OCI-LY7 (cell line): ENCODE measurements at regions of chr22 and their contacts with region 1.

Region 1: DNA sequence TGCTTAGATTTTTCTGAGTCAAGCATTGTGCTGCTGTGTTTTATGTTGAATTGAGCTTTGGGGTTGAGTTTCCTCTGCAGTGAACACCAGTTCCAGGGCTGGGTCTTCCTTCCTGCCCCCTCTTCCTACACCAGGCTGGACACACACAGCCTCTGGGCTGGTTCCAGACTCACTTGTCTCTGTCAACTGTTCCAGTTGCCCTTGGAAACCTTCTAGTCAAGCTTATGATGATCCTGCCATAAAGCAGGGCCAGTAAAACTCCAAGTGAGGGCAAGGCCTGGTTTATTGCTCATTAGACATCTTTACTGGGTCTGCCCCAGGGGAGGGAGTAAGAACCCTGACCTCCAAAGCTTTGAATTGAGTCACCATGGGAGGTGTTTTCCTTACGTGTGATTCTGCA is 61.1 kb downstream of the KIAA1671 start:
- DNase-seq: no peak
- H3K4me3 ChIP-seq: no peak overlapping the region
- H3K27ac ChIP-seq: no peak overlapping the region
- H3K4me1 ChIP-seq: no peaks in the 10 kb centered on the region
- CTCF ChIP-seq: no peak

Region 2: GRCh38 chr22:24985826-24986214 is 27.8 kb before region 1 on chr22:
- CTCF ChIA-PET with region 1: no interaction called
- POLR2A ChIA-PET with region 1: interaction called, 10 read pairs
- intact Hi-C with region 1: no loop called
- DNase-seq: no peak
- H3K4me3 ChIP-seq: no peak overlapping the region
- H3K27ac ChIP-seq: no peak overlapping the region
- H3K4me1 ChIP-seq: no peaks in the 10 kb centered on the region
- CTCF ChIP-seq: no peak

Region 3: DNA sequence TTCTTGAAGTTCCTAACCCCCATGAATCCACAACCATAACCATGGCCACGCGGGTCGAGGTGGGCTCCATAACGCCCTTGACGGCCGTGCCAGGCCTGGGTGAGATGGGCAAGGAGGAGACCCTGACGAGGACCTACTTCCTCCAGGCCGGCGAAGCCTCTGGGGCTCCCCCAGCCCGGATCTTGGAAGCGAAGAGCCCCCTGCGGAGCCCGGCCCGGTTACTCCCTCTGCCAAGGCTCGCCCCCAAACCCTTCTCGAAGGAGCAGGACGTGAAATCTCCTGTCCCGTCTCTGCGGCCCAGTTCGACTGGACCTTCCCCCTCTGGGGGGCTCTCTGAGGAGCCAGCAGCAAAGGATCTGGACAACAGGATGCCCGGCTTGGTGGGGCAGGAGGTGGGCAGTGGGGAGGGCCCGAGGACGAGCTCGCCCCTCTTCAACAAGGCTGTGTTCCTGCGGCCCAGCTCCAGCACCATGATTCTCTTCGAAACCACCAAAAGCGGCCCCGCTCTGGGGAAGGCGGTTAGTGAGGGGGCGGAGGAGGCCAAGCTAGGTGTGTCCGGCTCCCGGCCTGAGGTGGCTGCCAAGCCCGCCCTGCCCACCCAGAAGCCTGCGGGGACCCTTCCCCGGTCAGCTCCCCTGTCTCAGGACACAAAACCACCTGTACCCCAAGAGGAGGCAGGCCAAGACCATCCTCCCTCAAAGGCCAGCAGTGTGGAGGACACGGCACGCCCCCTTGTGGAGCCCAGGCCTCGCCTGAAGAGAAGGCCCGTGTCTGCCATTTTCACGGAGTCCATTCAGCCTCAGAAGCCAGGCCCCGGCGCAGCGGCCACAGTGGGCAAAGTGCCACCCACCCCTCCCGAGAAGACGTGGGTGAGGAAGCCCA is 14.6 kb after region 1 on chr22:
- CTCF ChIA-PET with region 1: no interaction called
- POLR2A ChIA-PET with region 1: no interaction called
- intact Hi-C with region 1: no loop called
- DNase-seq: no peak
- H3K4me3 ChIP-seq: no peak overlapping the region
- H3K27ac ChIP-seq: no peak overlapping the region
- H3K4me1 ChIP-seq: no peaks in the 10 kb centered on the region
- CTCF ChIP-seq: no peak

Region 4: GRCh38 chr22:25067851-25068421 is 54.3 kb after region 1 on chr22:
- CTCF ChIA-PET with region 1: no interaction called
- POLR2A ChIA-PET with region 1: no interaction called
- intact Hi-C with region 1: no loop called
- DNase-seq: no peak
- H3K4me3 ChIP-seq: no peak overlapping the region
- H3K27ac ChIP-seq: no peak overlapping the region
- H3K4me1 ChIP-seq: no peaks in the 10 kb centered on the region
- CTCF ChIP-seq: no peak